ENCODE measurements at regions of chr16 and their contacts with region 1.

Region 1: GRCh38 chr16:30065143-30065850 is at the start of gene ALDOA:
- DNase-seq: peak; percentile 95
- H3K4me3 Mint-ChIP-seq: peak within 1 kb of the TSS; percentile 99
- H3K27ac Mint-ChIP-seq: peak within 1 kb of the TSS; percentile 95
- H3K4me1 Mint-ChIP-seq: peaks cover 25% of the 10 kb centered on the region
- H3K27me3 Mint-ChIP-seq: peaks cover 1% of the 10 kb centered on the region
- total RNA-seq, gene ALDOA: 1,715 and 1,718 TPM in 2 replicates

Region 2: GRCh38 chr16:29900102-29900887 is 165.0 kb before region 1 on chr16 and contains the start of gene ASPHD1:
- intact Hi-C with region 1: loop called (anchors 1 kb)
- DNase-seq: no peak
- H3K4me3 Mint-ChIP-seq: peak within 1 kb of the TSS; percentile 82
- H3K27ac Mint-ChIP-seq: peak within 1 kb of the TSS; percentile 58
- H3K4me1 Mint-ChIP-seq: peaks cover 14% of the 10 kb centered on the region
- H3K27me3 Mint-ChIP-seq: peaks cover 32% of the 10 kb centered on the region
- total RNA-seq, gene ASPHD1: 4.2 and 4.7 TPM in 2 replicates

Region 3: DNA sequence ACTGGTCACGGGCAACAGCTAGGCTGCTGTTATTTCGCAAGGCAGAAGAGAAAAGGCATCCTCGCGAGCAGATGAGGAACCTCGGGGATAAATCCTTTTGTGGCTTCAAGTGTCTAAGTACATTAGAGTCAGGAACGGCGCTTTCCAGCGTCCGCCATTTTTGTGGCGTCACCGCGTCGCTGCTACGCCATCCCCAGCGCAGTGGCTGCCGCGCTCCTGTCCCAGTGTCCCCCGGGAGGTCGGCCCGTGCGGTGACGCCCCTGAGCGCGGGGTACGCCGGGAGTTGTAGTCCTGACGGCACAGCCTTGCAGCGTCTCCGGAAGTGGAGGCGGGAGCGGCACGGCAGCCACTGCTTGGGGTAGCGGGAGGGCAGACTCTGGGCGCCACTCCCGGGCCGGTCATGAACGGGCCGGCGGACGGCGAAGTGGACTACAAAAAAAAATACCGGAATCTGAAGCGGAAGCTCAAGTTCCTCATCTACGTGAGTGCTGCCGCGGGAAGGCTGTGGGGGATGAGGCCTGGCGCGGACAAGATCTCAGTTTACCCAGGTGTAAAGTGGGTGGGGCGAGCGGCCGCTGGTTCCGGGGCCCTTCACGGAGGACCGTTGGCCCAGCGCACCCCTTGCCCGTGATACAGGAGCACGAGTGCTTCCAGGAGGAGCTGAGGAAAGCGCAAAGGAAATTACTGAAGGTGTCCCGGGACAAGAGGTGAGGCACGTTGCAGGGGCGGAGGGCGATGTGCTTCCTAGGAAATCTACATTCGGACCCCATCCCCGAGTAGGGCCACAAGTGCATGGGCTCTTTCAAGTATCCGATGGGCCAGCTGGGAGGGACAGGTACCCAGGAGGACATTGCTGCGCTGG is 69.2 kb before region 1 on chr16 and contains the start of gene INO80E:
- intact Hi-C with region 1: loop called (anchors 1 kb)
- DNase-seq: peak; percentile 99
- H3K4me3 Mint-ChIP-seq: peak within 1 kb of the TSS; percentile 98
- H3K27ac Mint-ChIP-seq: peak within 1 kb of the TSS; percentile 96
- H3K4me1 Mint-ChIP-seq: peaks cover 39% of the 10 kb centered on the region
- H3K27me3 Mint-ChIP-seq: no peaks in the 10 kb centered on the region
- total RNA-seq, gene INO80E: 128 and 137 TPM in 2 replicates

Region 4: GRCh38 chr16:30052671-30053372 is 12.5 kb before region 1 on chr16:
- intact Hi-C with region 1: loop called (anchors 1 kb)
- DNase-seq: peak; percentile 89
- H3K4me3 Mint-ChIP-seq: peak overlapping the region; percentile 87
- H3K27ac Mint-ChIP-seq: peak overlapping the region; percentile 82
- H3K4me1 Mint-ChIP-seq: peaks cover 28% of the 10 kb centered on the region
- H3K27me3 Mint-ChIP-seq: no peaks in the 10 kb centered on the region

Region 5: GRCh38 chr16:30091474-30092372 is 26.4 kb after region 1 on chr16 and contains the start of gene TBX6:
- intact Hi-C with region 1: loop called (anchors 1 kb)
- DNase-seq: peak; percentile 94
- H3K4me3 Mint-ChIP-seq: peak within 1 kb of the TSS; percentile 88
- H3K27ac Mint-ChIP-seq: peak within 1 kb of the TSS; percentile 90
- H3K4me1 Mint-ChIP-seq: peaks cover 56% of the 10 kb centered on the region
- H3K27me3 Mint-ChIP-seq: no peaks in the 10 kb centered on the region
- total RNA-seq, gene TBX6: 1.6 and 1.8 TPM in 2 replicates

Region 6: DNA sequence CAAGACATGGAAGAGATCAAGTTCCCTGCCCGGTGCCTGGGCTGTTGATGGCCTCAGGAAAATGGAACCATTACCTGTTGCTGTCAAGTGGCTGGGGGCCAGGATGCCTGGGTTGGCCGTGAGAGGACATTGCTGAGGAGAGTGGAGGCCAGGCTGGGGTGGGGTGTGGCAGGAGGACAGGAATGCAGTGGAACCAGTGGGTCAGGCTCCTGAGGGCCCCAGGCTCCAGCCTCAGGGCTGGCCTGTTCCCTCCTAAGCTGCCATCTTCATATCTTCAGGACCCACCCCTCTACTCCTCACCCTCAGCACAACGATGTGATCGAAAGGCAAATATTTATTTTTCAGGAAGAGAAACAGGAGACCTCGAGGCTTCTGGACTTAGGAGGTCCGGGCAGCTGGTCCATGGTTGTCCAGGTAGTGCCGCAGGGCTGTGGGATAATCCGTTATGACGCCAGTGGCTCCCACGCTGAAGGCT is 39.2 kb after region 1 on chr16:
- intact Hi-C with region 1: no loop called
- DNase-seq: no peak
- H3K4me3 Mint-ChIP-seq: no peak overlapping the region
- H3K27ac Mint-ChIP-seq: no peak overlapping the region
- H3K4me1 Mint-ChIP-seq: no peaks in the 10 kb centered on the region
- H3K27me3 Mint-ChIP-seq: no peaks in the 10 kb centered on the region

Region 7: DNA sequence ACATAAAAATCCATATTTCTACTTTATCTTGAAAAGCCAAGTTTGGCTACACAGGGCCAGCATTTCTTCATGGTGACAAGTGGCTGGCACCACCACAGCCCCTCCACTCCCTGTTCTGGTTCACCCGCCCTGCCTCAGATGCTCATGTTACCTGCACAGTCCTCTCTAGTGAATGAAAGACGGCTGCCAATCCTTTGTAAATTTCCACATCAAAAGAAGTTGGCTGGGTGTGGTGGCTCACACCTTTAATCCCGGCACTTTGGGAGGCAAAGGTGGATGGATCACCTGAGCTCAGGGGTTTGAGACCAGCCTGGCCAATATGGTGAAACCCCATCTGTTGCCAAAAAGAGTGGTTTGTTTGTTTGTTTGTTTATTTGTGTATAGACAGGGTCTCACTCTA is 98.2 kb after region 1 on chr16:
- intact Hi-C with region 1: no loop called
- DNase-seq: no peak
- H3K4me3 Mint-ChIP-seq: no peak overlapping the region
- H3K27ac Mint-ChIP-seq: no peak overlapping the region
- H3K4me1 Mint-ChIP-seq: peaks cover 22% of the 10 kb centered on the region
- H3K27me3 Mint-ChIP-seq: no peaks in the 10 kb centered on the region

Region 8: DNA sequence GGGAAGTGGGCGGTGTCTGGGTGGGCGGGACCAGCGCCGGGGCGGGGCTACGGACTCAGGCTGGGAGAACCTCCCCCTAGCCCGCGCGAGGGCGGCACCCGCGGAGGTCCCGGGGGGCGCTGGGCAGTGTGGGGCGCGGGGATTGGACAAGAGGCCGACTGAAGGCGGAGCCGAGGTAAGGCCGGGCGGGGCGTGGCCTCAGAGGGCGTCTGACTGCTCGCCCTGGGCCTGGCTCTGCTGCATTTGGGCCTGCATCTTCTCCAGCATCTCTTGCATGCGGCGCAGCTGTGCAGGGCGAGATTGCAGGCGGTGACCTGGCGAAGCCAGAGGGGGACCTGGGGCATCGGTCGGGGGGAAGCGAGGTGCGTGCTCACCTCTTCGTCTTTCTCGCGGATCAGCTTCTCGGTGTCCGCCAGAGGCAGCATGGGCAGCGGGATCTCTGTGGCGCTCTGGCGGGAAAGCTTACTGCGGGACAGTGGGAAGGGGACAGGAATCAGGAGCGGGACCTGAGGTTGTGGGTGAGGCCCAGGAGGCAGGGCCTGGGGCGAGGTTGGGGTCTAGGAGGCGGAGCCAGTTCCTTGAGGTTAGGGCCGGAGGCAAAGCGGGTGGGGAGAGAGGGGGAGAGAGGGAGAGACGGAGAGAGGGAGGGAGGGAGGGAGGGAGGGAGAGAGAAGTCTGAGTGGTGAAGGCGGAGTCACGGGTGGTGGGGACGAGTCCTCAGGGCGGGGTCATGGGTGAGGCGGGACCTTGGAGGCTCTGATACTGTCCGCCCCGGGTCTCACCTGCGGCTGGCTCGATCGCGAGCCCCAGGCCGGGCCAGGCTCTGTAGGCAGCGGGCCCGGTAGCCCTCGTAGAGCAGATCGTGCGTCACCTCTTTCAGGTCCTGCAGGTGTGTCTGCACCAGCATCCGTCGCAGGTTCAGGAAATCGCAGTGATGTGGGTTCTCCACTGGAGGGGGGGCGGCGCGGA is 313.2 kb after region 1 on chr16:
- intact Hi-C with region 1: loop called (anchors 2 kb)
- DNase-seq: peak; percentile 98
- H3K4me3 Mint-ChIP-seq: peak overlapping the region; percentile 97
- H3K27ac Mint-ChIP-seq: peak overlapping the region; percentile 100
- H3K4me1 Mint-ChIP-seq: peaks cover 55% of the 10 kb centered on the region
- H3K27me3 Mint-ChIP-seq: peaks cover 2% of the 10 kb centered on the region

Region 9: DNA sequence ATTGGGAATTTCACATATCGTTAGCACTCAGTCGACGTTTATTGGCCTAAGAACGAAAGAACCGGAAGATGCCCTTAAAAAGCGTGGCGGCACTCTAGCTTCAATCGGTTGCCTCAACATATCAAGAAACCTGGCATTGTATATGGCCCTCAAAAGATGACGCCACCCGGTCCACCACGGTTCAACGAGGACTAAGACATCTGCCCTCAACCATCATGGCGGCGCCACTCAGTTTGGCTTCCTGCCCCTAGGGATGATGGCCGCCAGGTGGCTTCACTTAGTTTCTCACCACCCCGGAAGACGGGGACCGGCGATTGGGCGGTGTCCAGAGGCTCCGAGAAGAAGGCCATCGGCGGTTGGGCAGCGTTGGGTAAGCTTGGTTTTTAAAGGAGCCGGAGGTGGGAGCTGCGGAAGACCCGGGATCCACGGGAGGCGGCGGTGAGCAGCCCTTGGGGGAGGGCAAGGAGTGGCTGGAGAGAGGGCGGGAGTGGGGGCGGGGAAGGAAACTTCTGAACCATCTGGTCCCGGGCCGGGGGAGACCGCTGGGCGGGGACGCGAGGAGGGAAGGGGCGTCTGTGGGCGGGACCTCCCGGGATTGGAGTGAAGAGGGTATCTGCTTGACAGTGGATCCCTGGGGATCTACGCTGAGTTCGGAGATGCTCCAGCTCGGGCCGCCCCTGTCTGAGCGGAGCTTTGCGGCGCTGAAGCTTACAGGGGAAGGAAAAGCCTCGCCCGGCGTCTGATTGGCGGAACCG is 585.2 kb after region 1 on chr16 and contains the start of gene PRR14:
- intact Hi-C with region 1: loop called (anchors 2 kb)
- DNase-seq: peak; percentile 98
- H3K4me3 Mint-ChIP-seq: peak within 1 kb of the TSS; percentile 97
- H3K27ac Mint-ChIP-seq: peak within 1 kb of the TSS; percentile 98
- H3K4me1 Mint-ChIP-seq: peaks cover 25% of the 10 kb centered on the region
- H3K27me3 Mint-ChIP-seq: peaks cover 2% of the 10 kb centered on the region
- total RNA-seq, gene PRR14: 91.9 and 97.4 TPM in 2 replicates

Measured in activated T-helper 1 cell treated with anti-CD3 and anti-CD28 coated beads, Interleukin-12 subunit alpha, Interleukin-12 subunit beta, Interleukin-2, Interleukin-4 antibody, amounts not matched to agents 30 ng/mL and 10 ng/mL and 1 ng/mL, durations not matched to agents 14 hours and 24 hours and 36 hours (primary cell).